IMR-90 (cell line): ENCODE measurements at regions of chr4 and their contacts with region 1.

Region 1: GRCh38 chr4:99593781-99594636 is 19.4 kb downstream of the MTTP start:
- DNase-seq: no peak
- ATAC-seq: no peak
- H3K4me3 ChIP-seq: no peak overlapping the region
- H3K27ac ChIP-seq: no peak overlapping the region
- H3K4me1 ChIP-seq: no peaks in the 10 kb centered on the region
- H3K27me3 ChIP-seq: no peaks in the 10 kb centered on the region
- CTCF ChIP-seq: no peak
- POLR2A ChIP-seq: no peak
- RAD21 ChIP-seq: no peak

Region 2: DNA sequence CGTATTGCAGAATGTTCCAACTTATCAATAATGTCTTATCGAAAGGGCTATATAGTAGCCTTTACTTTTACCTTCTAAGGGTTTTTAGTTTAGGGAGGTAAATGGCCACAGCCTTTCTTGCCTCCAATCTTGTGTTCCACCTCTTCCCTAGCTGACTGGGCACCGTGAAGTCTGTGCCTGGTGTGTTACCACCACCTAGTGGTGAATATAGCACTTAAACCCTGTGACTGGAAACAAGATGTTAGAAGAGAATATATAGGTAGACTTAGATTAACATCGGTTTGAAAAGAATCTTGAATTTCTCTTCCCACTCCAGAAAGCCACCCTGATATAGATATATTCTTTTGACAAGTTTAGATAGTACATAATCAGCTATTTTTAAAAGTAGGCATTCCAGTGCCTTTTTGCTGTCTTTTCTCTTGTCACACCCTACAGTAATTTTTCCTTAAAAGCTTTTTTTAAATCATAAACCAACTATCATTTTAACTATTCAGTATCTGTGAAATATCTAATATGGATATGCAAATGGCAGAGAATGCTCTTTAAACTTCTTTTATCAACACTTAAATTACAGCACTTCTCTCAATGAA is 131.0 kb before region 1 on chr4:
- CTCF ChIA-PET with region 1: no interaction called
- POLR2A ChIA-PET with region 1: no interaction called
- dilution Hi-C with region 1: no loop called
- in situ Hi-C with region 1: no loop called
- intact Hi-C with region 1: no loop called
- DNase-seq: peak; percentile 72
- ATAC-seq: peak; percentile 98
- H3K4me3 ChIP-seq: no peak overlapping the region
- H3K27ac ChIP-seq: no peak overlapping the region
- H3K4me1 ChIP-seq: no peaks in the 10 kb centered on the region
- H3K27me3 ChIP-seq: 0 out of 2 replicates have a peak, but pooled peaks cover 1% of the 10 kb centered on the region
- CTCF ChIP-seq: peak; percentile 92
- POLR2A ChIP-seq: no peak
- RAD21 ChIP-seq: peak; percentile 98

Region 3: DNA sequence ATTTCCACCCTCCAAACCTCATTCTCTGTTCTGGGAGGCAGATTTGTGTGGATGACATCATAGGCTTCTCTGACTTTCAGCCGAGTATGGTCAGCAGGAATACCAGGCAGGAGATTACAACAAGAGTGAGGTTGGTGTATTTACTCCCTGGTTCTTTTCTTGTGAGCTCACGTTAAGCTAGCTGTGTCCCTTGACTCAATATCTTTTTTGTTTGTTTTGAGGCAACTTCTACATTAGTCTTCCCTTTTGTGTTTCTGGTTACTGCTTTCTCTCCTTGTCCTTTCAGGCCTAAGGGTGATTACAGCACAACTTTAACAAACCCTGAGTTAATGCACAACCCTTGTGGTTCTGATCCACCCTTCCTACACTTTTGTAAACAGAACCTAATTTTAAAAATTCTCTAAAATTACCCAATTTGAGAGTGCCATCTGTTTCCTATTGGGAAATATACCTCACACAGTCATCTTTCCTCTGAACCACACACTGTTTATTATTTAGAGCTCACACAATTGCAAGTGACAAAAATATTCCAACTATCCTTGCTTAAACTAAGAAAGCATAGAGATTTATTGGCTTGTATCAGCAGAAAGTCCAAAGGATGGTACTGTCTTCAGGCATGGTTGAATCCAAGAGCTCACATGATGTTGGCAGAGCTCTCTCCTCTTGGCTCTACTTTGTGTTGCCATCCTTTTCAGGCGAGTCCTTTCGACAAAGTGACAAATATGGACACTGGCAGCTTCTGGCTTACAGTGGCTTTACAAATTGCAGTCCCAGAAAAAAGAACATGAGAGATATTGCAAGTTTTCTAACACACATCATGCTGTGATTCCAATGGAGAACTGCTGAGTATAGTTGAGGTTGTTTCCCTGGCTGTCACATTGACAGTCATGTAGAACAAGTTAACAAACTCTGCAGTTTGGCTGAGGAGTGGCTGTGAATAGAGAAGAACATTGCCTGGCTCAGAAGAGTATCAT is 746.8 kb after region 1 on chr4:
- CTCF ChIA-PET with region 1: interaction called, 10 read pairs
- POLR2A ChIA-PET with region 1: no interaction called
- dilution Hi-C with region 1: no loop called
- in situ Hi-C with region 1: no loop called
- intact Hi-C with region 1: no loop called
- DNase-seq: peak; percentile 74
- ATAC-seq: peak; percentile 81
- H3K4me3 ChIP-seq: no peak overlapping the region
- H3K27ac ChIP-seq: no peak overlapping the region
- H3K4me1 ChIP-seq: peaks cover 3% of the 10 kb centered on the region
- H3K27me3 ChIP-seq: no peaks in the 10 kb centered on the region
- CTCF ChIP-seq: no peak
- POLR2A ChIP-seq: no peak
- RAD21 ChIP-seq: no peak